HEK293 (cell line): ENCODE measurements at regions of chr1 and their contacts with region 1.

Region 1: GRCh38 chr1:160376525-160377131 is 9.8 kb downstream of the NHLH1 start:
- H3K4me3 ChIP-seq: no peak overlapping the region
- H3K27ac ChIP-seq: no peak overlapping the region
- H3K4me1 ChIP-seq: no peaks in the 10 kb centered on the region
- CTCF ChIP-seq: peak; percentile 91

Region 2: DNA sequence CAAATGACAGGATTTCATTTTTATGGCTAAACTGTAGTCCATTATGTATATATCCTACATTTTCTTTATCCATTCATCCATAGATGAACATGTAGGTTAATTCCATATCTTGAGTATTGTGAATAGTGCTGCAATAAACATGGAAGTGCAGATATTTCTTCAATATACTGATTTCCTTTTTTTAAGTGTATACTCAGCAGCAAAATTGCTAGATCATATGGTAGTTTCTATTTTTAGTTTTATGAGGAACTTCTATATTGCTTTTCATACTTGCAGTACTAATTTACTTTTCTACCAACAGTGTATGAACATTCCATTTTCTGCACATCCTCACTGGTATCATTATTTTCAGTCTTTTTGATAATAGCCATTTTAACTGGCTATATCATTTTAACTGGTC is 871.0 kb before region 1 on chr1:
- CTCF ChIA-PET with region 1: no interaction called
- POLR2A ChIA-PET with region 1: no interaction called
- H3K4me3 ChIP-seq: no peak overlapping the region
- H3K27ac ChIP-seq: no peak overlapping the region
- H3K4me1 ChIP-seq: no peaks in the 10 kb centered on the region
- CTCF ChIP-seq: no peak

Region 3: GRCh38 chr1:160098852-160099561 is 277.6 kb before region 1 on chr1:
- CTCF ChIA-PET with region 1: interaction called, 28 read pairs
- POLR2A ChIA-PET with region 1: no interaction called
- H3K4me3 ChIP-seq: peak overlapping the region; percentile 15
- H3K27ac ChIP-seq: no peak overlapping the region
- H3K4me1 ChIP-seq: peaks cover 4% of the 10 kb centered on the region
- CTCF ChIP-seq: no peak

Region 4: GRCh38 chr1:160291248-160292220 is 85.1 kb before region 1 on chr1:
- CTCF ChIA-PET with region 1: interaction called, 40 read pairs
- POLR2A ChIA-PET with region 1: no interaction called
- H3K4me3 ChIP-seq: no peak overlapping the region
- H3K27ac ChIP-seq: no peak overlapping the region
- H3K4me1 ChIP-seq: no peaks in the 10 kb centered on the region
- CTCF ChIP-seq: peak; percentile 70

Region 5: DNA sequence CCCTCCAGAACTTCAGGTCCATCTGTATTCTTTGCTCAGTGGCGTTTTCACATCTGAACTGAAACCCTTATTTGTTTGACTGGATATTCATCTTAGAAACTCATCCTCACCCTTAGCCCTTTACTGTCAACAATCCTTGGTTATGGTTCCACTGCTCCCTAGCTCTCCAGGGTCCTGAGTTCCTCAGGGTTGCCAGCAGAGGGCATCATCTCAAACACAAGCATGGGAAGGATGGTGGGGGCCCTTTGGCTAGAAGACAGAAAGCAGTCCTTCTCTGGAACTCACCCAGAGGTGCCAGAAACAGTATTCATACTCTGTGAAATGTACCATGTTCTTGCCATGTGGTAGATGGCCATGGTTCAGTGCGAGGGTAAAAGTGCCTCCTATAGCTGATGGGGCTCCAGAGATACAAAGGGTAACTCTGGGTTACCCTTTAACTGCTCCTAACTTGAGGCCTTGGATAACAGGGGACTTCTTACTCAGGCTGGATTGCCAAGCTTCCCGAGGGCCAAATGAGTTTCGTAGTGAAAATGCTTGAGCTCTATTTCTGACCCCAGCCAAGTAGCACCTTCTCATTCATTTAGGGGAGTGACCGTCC is 22.1 kb before region 1 on chr1:
- CTCF ChIA-PET with region 1: interaction called, 175 read pairs
- POLR2A ChIA-PET with region 1: interaction called, 6 read pairs
- H3K4me3 ChIP-seq: no peak overlapping the region
- H3K27ac ChIP-seq: no peak overlapping the region
- H3K4me1 ChIP-seq: no peaks in the 10 kb centered on the region
- CTCF ChIP-seq: 0 out of 2 replicates have a peak, but pooled peaks have one; percentile 53

Region 6: DNA sequence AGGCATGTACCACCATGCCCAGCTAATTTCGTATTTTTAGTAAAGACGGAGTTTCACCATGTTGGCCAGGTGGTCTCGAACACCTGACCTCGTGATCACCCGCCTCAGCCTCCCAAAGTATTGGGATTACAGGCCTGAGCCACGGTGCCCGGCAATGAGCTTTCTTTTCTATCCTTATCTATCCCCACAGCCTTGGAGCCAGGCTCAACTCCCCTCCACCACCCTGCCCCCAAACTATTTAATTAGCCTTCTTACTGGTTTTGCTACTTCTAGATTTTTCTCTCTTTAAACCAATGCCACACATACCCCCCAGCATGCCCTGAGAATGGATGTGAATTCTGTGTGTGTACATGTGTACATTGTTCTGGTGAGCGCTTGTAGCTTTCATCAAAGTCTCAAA is 18.0 kb after region 1 on chr1:
- CTCF ChIA-PET with region 1: interaction called, 16 read pairs
- POLR2A ChIA-PET with region 1: no interaction called
- H3K4me3 ChIP-seq: no peak overlapping the region
- H3K27ac ChIP-seq: no peak overlapping the region
- H3K4me1 ChIP-seq: no peaks in the 10 kb centered on the region
- CTCF ChIP-seq: no peak

Region 7: GRCh38 chr1:160416369-160416768 is 39.7 kb after region 1 on chr1:
- CTCF ChIA-PET with region 1: interaction called, 23 read pairs
- POLR2A ChIA-PET with region 1: no interaction called
- H3K4me3 ChIP-seq: no peak overlapping the region
- H3K27ac ChIP-seq: no peak overlapping the region
- H3K4me1 ChIP-seq: no peaks in the 10 kb centered on the region
- CTCF ChIP-seq: peak; percentile 77

Region 8: DNA sequence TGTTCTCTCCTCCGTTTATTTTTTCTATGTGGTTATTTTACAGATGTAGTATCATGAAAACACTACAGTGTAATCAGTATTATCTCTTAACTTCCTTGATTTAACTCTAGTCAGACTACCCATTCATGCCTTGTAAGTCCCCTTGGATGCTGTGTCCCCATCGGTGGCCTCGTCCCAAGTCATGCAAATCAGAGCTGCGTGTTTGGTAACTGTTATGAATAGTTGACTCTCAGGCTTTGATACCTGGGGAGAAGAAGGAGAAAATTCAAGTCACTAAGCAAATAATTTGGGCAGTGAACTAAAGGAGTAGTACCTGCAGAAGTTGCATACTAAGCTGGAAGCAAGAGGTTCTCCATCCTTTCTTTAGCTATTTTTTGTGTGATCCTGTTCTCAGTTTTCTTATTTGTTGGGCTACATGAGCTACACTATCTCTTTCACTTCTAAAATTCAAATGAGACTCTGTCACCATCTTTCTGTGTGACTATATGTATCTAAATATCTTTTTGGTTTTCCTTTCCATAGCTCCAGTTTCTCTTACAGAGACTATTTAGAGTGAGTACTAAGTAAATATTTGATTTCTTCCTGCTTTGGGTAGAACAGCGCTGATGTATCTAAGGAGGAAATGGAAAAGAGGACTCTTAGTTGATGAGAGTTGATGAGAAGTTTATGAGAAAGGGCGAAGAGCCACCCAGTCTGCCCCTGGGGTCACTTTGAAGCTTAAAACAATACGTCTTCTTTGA is 74.7 kb after region 1 on chr1:
- CTCF ChIA-PET with region 1: no interaction called
- POLR2A ChIA-PET with region 1: no interaction called
- H3K4me3 ChIP-seq: no peak overlapping the region
- H3K27ac ChIP-seq: no peak overlapping the region
- H3K4me1 ChIP-seq: no peaks in the 10 kb centered on the region
- CTCF ChIP-seq: no peak

Region 9: DNA sequence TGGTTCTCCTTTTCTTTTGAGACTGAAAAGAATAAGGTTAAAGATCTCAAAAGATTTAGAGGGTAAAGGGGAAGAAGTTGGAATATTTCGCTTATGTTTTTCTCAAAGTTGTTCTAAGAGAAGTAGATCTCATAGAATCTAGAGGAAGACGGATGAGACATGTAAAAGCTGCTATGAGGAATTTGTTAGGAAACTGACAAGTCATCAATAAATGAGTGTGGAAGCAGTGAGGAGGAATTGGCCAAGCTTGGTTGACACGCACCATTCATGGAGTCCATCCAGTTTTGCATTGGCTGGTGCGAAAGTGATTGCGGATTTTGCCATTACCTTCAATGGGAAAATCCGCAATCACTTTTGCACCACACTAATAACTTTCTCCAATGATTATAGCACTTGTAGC is 126.5 kb after region 1 on chr1:
- CTCF ChIA-PET with region 1: no interaction called
- POLR2A ChIA-PET with region 1: no interaction called
- H3K4me3 ChIP-seq: no peak overlapping the region
- H3K27ac ChIP-seq: no peak overlapping the region
- H3K4me1 ChIP-seq: no peaks in the 10 kb centered on the region
- CTCF ChIP-seq: no peak